A673 (cell line): ENCODE measurements at regions of chr4 and their contacts with region 1.

Region 1: GRCh38 chr4:180828440-180829018 is 1414.7 kb upstream of the TENM3 start:
- DNase-seq: peak; percentile 81
- H3K4me3 ChIP-seq: no peak overlapping the region
- H3K27ac ChIP-seq: no peak overlapping the region
- H3K4me1 ChIP-seq: peaks cover 5% of the 10 kb centered on the region
- H3K27me3 ChIP-seq: no peaks in the 10 kb centered on the region
- CTCF ChIP-seq: peak; percentile 86

Region 2: GRCh38 chr4:180953572-180953971 is 125.0 kb after region 1 on chr4:
- CTCF ChIA-PET with region 1: no interaction called
- POLR2A ChIA-PET with region 1: no interaction called
- intact Hi-C with region 1: loop called (anchors 5 kb)
- DNase-seq: peak; percentile 23
- H3K4me3 ChIP-seq: no peak overlapping the region
- H3K27ac ChIP-seq: no peak overlapping the region
- H3K4me1 ChIP-seq: peaks cover 5% of the 10 kb centered on the region
- H3K27me3 ChIP-seq: no peaks in the 10 kb centered on the region
- CTCF ChIP-seq: peak; percentile 49

Region 3: DNA sequence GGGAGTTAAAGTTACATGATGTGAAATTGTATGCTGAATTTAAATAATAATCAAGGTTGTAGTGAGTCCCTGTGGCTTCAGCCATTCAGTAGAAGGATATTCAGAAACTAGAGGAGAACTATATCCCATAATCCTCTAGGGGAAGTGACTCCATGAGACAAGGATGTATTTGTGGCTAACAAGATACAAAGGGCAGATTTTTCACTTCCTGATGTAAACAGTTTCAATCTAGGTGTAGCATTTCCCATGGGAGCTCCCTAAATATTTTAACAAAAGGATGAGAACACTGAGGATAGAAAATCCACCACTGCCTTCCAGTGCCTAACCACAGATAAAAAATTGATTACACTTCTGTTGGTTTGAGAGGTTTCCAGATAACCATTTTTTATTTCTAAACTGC is 979.2 kb after region 1 on chr4:
- CTCF ChIA-PET with region 1: no interaction called
- POLR2A ChIA-PET with region 1: no interaction called
- intact Hi-C with region 1: no loop called
- DNase-seq: no peak
- H3K4me3 ChIP-seq: no peak overlapping the region
- H3K27ac ChIP-seq: no peak overlapping the region
- H3K4me1 ChIP-seq: no peaks in the 10 kb centered on the region
- H3K27me3 ChIP-seq: peaks cover 15% of the 10 kb centered on the region
- CTCF ChIP-seq: no peak